ENCODE measurements at regions of chr10 and their contacts with region 1.

Region 1: GRCh38 chr10:28663576-28664313 is 13.6 kb upstream of the BAMBI start:
- DNase-seq: peak; percentile 21 to 79 (median 55)
- ATAC-seq: peak; percentile 78 to 88 (median 86)
- H3K4me3 ChIP-seq: no peak overlapping the region
- H3K4me3 Mint-ChIP-seq: no peak overlapping the region
- H3K27ac ChIP-seq: no peak overlapping the region
- H3K27ac Mint-ChIP-seq: no peak overlapping the region
- H3K4me1 ChIP-seq: peaks cover 0 to 6% of the 10 kb centered on the region in 2 experiments
- H3K4me1 Mint-ChIP-seq: peaks cover 7 to 11% (median 9%) of the 10 kb centered on the region in 3 donors
- H3K27me3 ChIP-seq: peaks cover 6 to 29% of the 10 kb centered on the region in 2 experiments
- H3K27me3 Mint-ChIP-seq: peaks cover 40 to 57% of the 10 kb centered on the region in 2 donors

Region 2: GRCh38 chr10:28620251-28620650 is 43.5 kb before region 1 on chr10:
- CTCF ChIA-PET with region 1: no interaction called
- POLR2A ChIA-PET with region 1: no interaction called
- DNase-seq: no peak
- ATAC-seq: no peak
- H3K4me3 ChIP-seq: no peak overlapping the region
- H3K4me3 Mint-ChIP-seq: no peak overlapping the region
- H3K27ac ChIP-seq: no peak overlapping the region
- H3K27ac Mint-ChIP-seq: peak overlapping the region in 1 of 2 donors; percentile 26
- H3K4me1 ChIP-seq: no peaks in the 10 kb centered on the region
- H3K4me1 Mint-ChIP-seq: no peaks in the 10 kb centered on the region
- H3K27me3 ChIP-seq: no peaks in the 10 kb centered on the region
- H3K27me3 Mint-ChIP-seq: no peaks in the 10 kb centered on the region

Region 3: DNA sequence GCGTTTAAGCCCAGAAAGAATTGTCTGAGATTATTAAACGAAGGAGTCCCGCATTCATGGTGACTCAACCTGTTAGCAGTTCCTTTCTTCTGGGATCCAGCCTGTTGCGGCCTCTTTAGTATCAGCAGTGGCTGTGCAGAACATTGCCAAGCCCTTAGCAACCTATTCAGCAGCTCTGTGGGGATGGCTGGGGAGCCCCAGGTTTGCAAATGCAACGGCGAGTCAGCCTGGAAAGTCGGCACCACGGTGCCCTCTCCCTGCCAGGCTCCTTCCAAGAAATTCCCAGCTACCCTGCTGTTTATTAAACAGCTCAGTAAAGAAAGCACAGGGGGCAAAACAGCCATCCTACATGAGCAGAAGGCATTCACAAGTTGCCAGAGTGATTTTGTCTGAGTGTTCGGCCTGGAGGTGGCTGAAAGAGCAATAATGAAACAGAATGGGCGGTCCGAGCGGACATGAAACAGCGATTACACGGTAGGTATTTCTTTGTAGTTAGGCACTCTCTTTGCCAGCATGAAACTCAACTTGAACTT is 211.9 kb after region 1 on chr10:
- CTCF ChIA-PET with region 1: no interaction called
- POLR2A ChIA-PET with region 1: no interaction called
- DNase-seq: no peak
- ATAC-seq: no peak
- H3K4me3 ChIP-seq: no peak overlapping the region
- H3K4me3 Mint-ChIP-seq: no peak overlapping the region
- H3K27ac ChIP-seq: no peak overlapping the region
- H3K27ac Mint-ChIP-seq: no peak overlapping the region
- H3K4me1 ChIP-seq: no peaks in the 10 kb centered on the region
- H3K4me1 Mint-ChIP-seq: no peaks in the 10 kb centered on the region
- H3K27me3 ChIP-seq: peaks cover 0 to 9% of the 10 kb centered on the region in 2 experiments
- H3K27me3 Mint-ChIP-seq: no peaks in the 10 kb centered on the region

Region 4: GRCh38 chr10:28991326-28992270 is 327.9 kb after region 1 on chr10:
- CTCF ChIA-PET with region 1: interaction called, 8 to 12 read pairs
- POLR2A ChIA-PET with region 1: interaction called in 1 of 2 experiments, 6 read pairs
- DNase-seq: peak in 20 of 35 experiments; percentile 3 to 48 (median 13)
- ATAC-seq: peak in 2 of 4 experiments; percentile 30 to 39
- H3K4me3 ChIP-seq: no peak overlapping the region
- H3K4me3 Mint-ChIP-seq: no peak overlapping the region
- H3K27ac ChIP-seq: no peak overlapping the region
- H3K27ac Mint-ChIP-seq: no peak overlapping the region
- H3K4me1 ChIP-seq: no peaks in the 10 kb centered on the region
- H3K4me1 Mint-ChIP-seq: no peaks in the 10 kb centered on the region
- H3K27me3 ChIP-seq: peaks cover 0 to 5% of the 10 kb centered on the region in 2 experiments
- H3K27me3 Mint-ChIP-seq: peaks cover 8 to 10% of the 10 kb centered on the region in 2 donors

Region 5: DNA sequence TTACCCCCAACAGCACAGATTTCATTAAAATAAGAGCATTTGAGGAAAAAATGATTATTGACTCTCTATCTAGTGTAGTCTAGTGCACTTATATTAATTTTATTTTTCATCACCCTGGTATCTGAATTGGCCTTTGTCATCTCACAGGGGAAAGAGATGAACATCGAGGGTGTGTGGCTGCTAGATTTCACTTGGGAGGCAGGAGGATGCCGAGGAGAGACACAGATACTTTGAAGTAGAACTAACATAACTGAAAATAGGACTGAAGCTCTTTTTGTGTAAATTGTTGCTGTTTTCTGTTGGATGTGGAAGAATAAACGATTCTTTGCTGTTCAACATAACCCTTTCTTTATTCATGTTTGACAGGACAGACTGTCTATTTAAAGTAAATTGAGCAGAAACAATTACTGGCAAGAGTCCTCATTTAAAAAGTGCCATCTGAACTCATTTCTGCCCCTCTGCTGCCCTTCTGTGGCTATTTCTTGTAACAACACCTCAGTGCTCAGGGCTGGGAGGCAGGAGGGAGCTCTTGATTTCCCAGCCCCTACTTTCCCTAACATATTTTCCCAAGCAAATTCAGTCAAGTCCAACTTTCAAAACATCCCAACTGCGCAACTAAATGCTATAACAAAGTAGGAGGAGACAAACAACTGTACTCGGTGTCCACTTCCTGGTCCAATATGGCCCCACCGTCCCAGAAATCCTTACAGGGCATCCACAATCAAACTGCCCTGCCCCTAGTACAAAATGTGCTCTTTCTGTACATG is 640.7 kb after region 1 on chr10:
- CTCF ChIA-PET with region 1: interaction called, 7 to 10 read pairs
- POLR2A ChIA-PET with region 1: no interaction called
- DNase-seq: peak in 7 of 35 experiments; percentile 3 to 43 (median 5)
- ATAC-seq: no peak
- H3K4me3 ChIP-seq: no peak overlapping the region
- H3K4me3 Mint-ChIP-seq: no peak overlapping the region
- H3K27ac ChIP-seq: no peak overlapping the region
- H3K27ac Mint-ChIP-seq: no peak overlapping the region
- H3K4me1 ChIP-seq: peaks cover 0 to 2% of the 10 kb centered on the region in 2 experiments
- H3K4me1 Mint-ChIP-seq: peaks cover 2 to 6% (median 2%) of the 10 kb centered on the region in 3 donors
- H3K27me3 ChIP-seq: peaks cover 0 to 10% of the 10 kb centered on the region in 2 experiments
- H3K27me3 Mint-ChIP-seq: peaks cover 17 to 39% of the 10 kb centered on the region in 2 donors